Esophagus muscularis mucosa (tissue), 4 donors: ENCODE measurements at regions of chr12 and their contacts with region 1.

Region 1: DNA sequence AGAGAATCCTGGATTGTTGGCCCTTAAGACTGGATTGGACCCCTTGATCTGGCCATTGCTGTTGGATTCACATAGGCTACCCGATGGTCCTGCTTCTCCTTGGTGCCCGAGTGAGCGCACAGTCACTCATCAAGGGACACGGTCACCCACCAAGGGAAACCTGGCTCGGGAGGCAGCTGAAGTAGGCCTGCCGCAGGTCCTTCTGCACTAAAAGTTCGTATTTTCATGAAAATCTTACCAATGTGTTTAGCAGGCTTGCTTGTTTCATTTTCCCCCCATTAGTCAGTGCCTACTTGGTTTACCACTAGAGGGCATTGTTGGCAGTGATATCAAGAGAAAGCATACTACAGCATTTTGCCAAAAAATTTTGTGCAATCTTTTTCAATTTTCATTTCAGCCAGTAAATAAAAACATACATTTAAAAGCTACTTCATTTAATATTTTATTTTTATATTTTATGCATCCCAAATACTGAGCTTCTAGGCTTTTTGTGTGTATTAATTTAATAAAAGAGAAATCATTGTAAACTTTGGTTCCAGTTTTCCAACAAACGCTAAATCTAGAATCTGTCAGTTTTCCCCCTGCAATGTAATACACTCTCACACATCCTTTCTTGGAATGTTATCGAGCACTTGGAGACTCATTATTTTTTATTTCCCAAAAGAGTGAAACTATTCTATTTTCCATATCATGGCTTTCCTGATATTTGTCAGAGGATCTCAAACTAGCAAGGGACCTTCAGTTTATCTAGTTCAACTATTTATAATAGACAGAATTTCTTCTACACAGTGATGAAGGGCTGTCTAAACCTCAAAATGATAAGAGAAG is 116.7 kb downstream of the LMNTD1 start:
- DNase-seq: no peak
- H3K4me3 ChIP-seq: peak overlapping the region; percentile 29 to 50 (median 36)
- H3K27ac ChIP-seq: peak overlapping the region in 2 of 4 donors; percentile 26 to 29
- H3K4me1 ChIP-seq: peaks cover 5 to 34% (median 28%) of the 10 kb centered on the region in 4 donors
- H3K27me3 ChIP-seq: no peaks in the 10 kb centered on the region
- CTCF ChIP-seq: peak; percentile 70 to 86 (median 86)
- EP300 ChIP-seq: no peak
- POLR2A ChIP-seq: no peak

Region 2: DNA sequence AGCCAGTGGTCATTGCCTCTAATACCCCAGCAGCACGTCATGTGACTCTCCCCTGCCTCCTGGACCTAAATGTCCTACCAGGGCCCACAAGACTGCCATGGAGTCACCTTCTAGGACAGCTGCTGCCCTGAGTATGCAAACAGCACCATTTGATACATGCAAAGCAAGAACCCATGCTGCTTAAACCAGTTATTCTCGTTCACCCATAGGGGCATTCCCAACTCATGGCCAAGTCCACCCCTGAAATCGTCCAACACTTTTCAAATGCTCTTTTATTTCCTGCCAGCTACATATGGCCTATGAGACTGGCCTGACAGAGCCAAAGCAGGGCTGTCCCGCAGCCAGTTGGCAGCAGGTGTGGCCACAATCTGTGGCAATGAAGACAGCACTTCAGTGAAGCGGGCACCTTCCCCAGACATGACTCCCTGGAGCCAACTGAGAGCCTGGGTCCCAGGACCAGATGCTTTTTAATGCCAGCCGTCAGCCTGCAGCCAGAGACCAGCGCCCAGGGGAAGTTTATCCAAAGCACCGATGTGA is 587.4 kb before region 1 on chr12:
- intact Hi-C with region 1: no loop called
- DNase-seq: no peak
- H3K4me3 ChIP-seq: no peak overlapping the region
- H3K27ac ChIP-seq: no peak overlapping the region
- H3K4me1 ChIP-seq: no peaks in the 10 kb centered on the region
- H3K27me3 ChIP-seq: no peaks in the 10 kb centered on the region
- CTCF ChIP-seq: no peak
- EP300 ChIP-seq: no peak
- POLR2A ChIP-seq: no peak

Region 3: DNA sequence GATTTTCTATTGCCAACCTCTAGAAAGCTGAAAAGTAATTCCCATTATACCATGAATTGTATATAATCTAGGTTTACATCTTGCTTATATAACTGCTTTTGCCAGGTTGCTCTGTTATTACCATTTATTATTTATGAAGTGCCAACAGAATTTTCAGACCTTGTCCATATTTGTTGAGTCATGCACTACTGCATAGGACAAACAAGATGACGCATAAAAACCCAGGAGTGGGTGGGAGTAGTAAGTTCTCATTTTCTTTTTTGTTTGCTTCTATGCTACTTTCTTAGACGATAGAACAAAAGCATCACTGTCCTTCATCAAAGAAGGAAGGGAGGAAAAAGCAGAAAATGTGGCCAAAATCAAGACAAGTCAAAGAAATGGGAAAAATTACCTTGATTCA is 403.0 kb after region 1 on chr12:
- intact Hi-C with region 1: loop called (anchors 10 kb)
- DNase-seq: no peak
- H3K4me3 ChIP-seq: no peak overlapping the region
- H3K27ac ChIP-seq: no peak overlapping the region
- H3K4me1 ChIP-seq: no peaks in the 10 kb centered on the region
- H3K27me3 ChIP-seq: no peaks in the 10 kb centered on the region
- CTCF ChIP-seq: no peak
- EP300 ChIP-seq: no peak
- POLR2A ChIP-seq: no peak

Region 4: DNA sequence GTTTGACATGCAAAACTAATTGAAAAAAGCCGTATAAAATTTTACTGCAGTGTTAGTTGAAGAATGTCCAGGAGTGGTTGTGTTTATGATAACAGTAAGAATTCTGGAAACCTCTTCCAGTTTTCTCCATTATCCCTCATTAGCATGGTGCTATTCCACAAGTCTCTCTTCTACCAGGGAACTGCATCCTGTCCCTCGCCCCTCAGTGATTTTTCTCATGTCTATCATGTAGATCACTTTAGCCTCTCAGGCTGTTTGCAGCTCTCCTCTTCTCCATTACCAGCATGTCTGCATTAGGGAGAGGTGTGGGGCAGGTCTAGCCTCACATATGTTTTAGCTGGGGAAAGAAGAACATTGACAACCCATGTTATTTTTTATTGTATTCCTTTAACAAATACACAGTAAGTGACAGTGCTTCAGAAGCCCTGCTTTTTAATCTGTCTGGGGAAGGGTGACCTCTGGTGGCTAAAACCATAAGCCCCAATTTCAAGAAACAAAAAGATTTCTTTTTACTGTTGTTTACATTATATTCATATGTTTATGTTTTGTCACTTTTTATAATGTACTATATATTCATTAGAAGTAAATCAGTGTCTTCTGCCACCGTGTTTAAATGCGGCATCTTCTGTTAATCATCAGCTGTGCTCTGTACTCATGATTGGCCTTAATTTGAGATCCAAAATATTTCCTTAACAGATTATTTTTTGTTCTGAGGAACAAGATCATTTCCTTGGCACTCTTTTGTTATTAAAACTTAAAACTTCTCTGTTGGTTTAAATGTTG is 592.7 kb after region 1 on chr12:
- intact Hi-C with region 1: loop called (anchors 2 kb)
- DNase-seq: no peak
- H3K4me3 ChIP-seq: no peak overlapping the region
- H3K27ac ChIP-seq: peak overlapping the region in 2 of 4 donors; percentile 3 to 54
- H3K4me1 ChIP-seq: peaks cover 9 to 59% (median 54%) of the 10 kb centered on the region in 4 donors
- H3K27me3 ChIP-seq: no peaks in the 10 kb centered on the region
- CTCF ChIP-seq: peak; percentile 77 to 91 (median 89)
- EP300 ChIP-seq: no peak
- POLR2A ChIP-seq: no peak